Heart right ventricle (tissue), 16 donors: ENCODE measurements at regions of chr9 and their contacts with region 1.

Region 1: GRCh38 chr9:11023201-11023600 is 410.4 kb upstream of the PTPRD start:
- DNase-seq: no peak
- ATAC-seq: no peak
- H3K4me3 ChIP-seq: no peak overlapping the region
- H3K27ac ChIP-seq: no peak overlapping the region
- H3K4me1 ChIP-seq: no peaks in the 10 kb centered on the region
- H3K27me3 ChIP-seq: no peaks in the 10 kb centered on the region
- CTCF ChIP-seq: no peak

Region 2: DNA sequence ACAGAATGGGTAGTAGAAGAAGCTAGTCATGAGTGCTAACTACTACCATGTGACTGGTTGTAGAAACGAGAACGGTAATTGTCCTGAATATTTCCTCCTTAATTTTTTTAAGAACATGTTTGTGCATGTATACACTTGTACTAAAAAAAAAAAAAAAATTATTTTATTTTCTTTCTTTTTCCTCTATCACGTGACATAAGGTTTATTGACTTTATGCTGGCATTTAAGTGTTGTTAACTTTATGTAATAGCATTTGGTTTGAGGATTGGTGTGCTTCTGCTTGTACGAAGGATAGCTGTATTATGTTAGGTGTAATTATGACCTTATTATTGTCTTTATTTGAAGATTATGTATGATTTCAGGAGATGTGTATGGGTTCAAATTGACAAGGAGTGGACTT is 61.3 kb before region 1 on chr9:
- intact Hi-C with region 1: loop called in 1 of 10 experiments (anchors 10 kb)
- DNase-seq: no peak
- ATAC-seq: no peak
- H3K4me3 ChIP-seq: no peak overlapping the region
- H3K27ac ChIP-seq: no peak overlapping the region
- H3K4me1 ChIP-seq: no peaks in the 10 kb centered on the region
- H3K27me3 ChIP-seq: no peaks in the 10 kb centered on the region
- CTCF ChIP-seq: no peak

Region 3: GRCh38 chr9:11149065-11149464 is 125.9 kb after region 1 on chr9:
- intact Hi-C with region 1: no loop called
- DNase-seq: no peak
- ATAC-seq: no peak
- H3K4me3 ChIP-seq: no peak overlapping the region
- H3K27ac ChIP-seq: no peak overlapping the region
- H3K4me1 ChIP-seq: no peaks in the 10 kb centered on the region
- H3K27me3 ChIP-seq: no peaks in the 10 kb centered on the region
- CTCF ChIP-seq: no peak